Mammary epithelial cell (primary cell): ENCODE measurements at regions of chr17 and their contacts with region 1.

Region 1: DNA sequence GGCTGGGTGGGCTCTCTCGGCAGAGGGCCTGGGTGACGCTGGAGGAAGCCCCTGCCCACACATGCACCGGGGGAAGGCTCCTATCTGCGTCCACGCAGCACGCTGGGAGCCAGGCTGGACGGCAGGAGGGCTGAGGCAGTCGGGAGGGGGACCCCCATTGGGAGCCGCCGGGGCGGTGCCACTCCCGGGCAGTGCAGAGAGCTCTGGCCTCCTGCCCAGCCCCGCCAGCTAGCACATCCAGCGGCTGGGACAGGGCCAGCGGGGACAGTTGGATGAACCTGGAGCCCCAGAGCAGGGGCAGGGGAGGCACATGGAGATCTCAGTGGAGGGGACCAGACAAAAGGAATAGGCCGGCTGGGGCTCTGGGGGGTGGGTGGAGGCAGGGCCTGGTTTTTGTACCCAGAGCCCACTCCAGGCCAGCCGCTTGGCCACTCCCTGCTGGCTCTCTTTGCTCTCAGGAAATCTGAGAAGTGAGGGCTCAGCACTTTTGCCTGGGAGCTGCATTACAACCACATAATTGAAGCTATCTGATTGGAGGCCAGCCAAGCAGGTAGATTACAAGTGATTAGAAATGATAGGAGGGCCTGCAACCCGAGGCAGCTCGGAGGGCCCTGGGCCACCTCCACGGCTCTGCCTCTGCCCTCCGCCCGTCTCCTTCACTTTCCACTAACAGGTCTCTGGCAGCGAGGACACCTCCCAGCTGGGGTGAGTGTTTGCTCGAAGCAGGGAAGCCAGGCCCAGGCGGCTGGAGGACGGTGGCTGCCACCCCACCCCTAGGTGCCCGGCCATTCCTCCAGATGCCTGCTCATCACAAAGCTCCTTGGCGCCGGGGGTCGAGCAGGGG is 40.1 kb downstream of the ENGASE start:
- DNase-seq: peak; percentile 54
- H3K4me3 ChIP-seq: no peak overlapping the region
- H3K27ac ChIP-seq: no peak overlapping the region
- H3K4me1 ChIP-seq: no peaks in the 10 kb centered on the region
- H3K27me3 ChIP-seq: peaks cover 3% of the 10 kb centered on the region
- CTCF ChIP-seq: no peak

Region 2: GRCh38 chr17:79147746-79148506 is 33.2 kb after region 1 on chr17:
- CTCF ChIA-PET with region 1: no interaction called
- dilution Hi-C with region 1: loop called (anchors 5 kb)
- in situ Hi-C with region 1: no loop called
- intact Hi-C with region 1: no loop called
- DNase-seq: no peak
- H3K4me3 ChIP-seq: no peak overlapping the region
- H3K27ac ChIP-seq: no peak overlapping the region
- H3K4me1 ChIP-seq: no peaks in the 10 kb centered on the region
- H3K27me3 ChIP-seq: peaks cover 3% of the 10 kb centered on the region
- CTCF ChIP-seq: no peak

Region 3: GRCh38 chr17:79272666-79273219 is 158.1 kb after region 1 on chr17:
- CTCF ChIA-PET with region 1: no interaction called
- dilution Hi-C with region 1: no loop called
- in situ Hi-C with region 1: no loop called
- intact Hi-C with region 1: no loop called
- DNase-seq: peak; percentile 55
- H3K4me3 ChIP-seq: no peak overlapping the region
- H3K27ac ChIP-seq: no peak overlapping the region
- H3K4me1 ChIP-seq: peaks cover 10% of the 10 kb centered on the region
- H3K27me3 ChIP-seq: peaks cover 5% of the 10 kb centered on the region
- CTCF ChIP-seq: peak in 1 of 2 donors; percentile 49